Sigmoid colon (tissue), 7 donors: ENCODE measurements at regions of chr13 and their contacts with region 1.

Region 1: GRCh38 chr13:76980075-76980718 is 11.7 kb upstream of the CLN5 start:
- DNase-seq: peak; percentile 83
- H3K4me3 ChIP-seq: peak overlapping the region in 3 of 4 donors; percentile 27 to 40 (median 30)
- H3K27ac ChIP-seq: no peak overlapping the region
- H3K4me1 ChIP-seq: peaks cover 0 to 10% (median 8%) of the 10 kb centered on the region in 4 donors
- H3K27me3 ChIP-seq: peaks cover 0 to 10% (median 0%) of the 10 kb centered on the region in 3 donors
- CTCF ChIP-seq: peak; percentile 68 to 98 (median 80)
- EP300 ChIP-seq: no peak
- POLR2A ChIP-seq: no peak

Region 2: GRCh38 chr13:75870397-75870903 is 1109.7 kb before region 1 on chr13:
- intact Hi-C with region 1: loop called (anchors 5 kb)
- DNase-seq: no peak
- H3K4me3 ChIP-seq: peak overlapping the region in 3 of 4 donors; percentile 26 to 32 (median 31)
- H3K27ac ChIP-seq: no peak overlapping the region
- H3K4me1 ChIP-seq: no peaks in the 10 kb centered on the region
- H3K27me3 ChIP-seq: no peaks in the 10 kb centered on the region
- CTCF ChIP-seq: peak; percentile 40 to 82 (median 58)
- EP300 ChIP-seq: no peak
- POLR2A ChIP-seq: no peak

Region 3: DNA sequence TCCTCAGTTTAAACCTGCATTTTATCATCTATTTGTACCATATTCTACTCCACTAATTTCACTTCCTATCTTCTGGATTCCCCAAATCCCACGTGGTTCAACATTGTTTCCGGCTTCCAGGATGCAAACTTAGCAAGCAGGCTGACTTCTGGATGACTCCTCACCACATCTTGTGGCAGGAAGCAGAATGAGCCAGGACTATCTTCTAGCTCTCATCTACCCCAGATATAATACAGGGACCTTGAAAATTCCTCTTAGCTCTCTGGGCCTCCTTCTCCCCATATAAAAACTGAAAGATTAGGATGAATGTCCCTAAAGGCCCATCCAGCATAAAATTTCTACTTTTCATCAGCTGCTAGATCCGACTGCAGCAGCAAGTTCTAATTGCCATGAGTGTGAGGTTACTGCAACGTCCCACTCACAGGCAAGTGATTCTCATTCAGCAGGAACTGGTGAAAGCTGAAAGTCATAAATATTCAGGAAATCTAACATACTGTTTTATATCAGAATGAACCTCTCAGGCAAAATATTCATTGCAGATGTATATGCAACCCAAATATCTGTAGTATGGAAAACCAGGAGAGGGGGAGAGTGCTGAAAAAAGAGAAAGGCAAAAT is 187.4 kb before region 1 on chr13:
- intact Hi-C with region 1: no loop called
- DNase-seq: peak; percentile 71
- H3K4me3 ChIP-seq: no peak overlapping the region
- H3K27ac ChIP-seq: peak overlapping the region in 3 of 4 donors; percentile 17 to 49 (median 33)
- H3K4me1 ChIP-seq: peaks cover 0 to 28% (median 12%) of the 10 kb centered on the region in 4 donors
- H3K27me3 ChIP-seq: no peaks in the 10 kb centered on the region
- CTCF ChIP-seq: no peak
- EP300 ChIP-seq: no peak
- POLR2A ChIP-seq: no peak

Region 4: GRCh38 chr13:77285098-77285497 is 304.9 kb after region 1 on chr13:
- intact Hi-C with region 1: no loop called
- DNase-seq: no peak
- H3K4me3 ChIP-seq: no peak overlapping the region
- H3K27ac ChIP-seq: no peak overlapping the region
- H3K4me1 ChIP-seq: no peaks in the 10 kb centered on the region
- H3K27me3 ChIP-seq: no peaks in the 10 kb centered on the region
- CTCF ChIP-seq: no peak
- EP300 ChIP-seq: no peak
- POLR2A ChIP-seq: no peak